Cardiac septum (tissue), 1 donor: ENCODE measurements at regions of chr9 and their contacts with region 1.

Region 1: GRCh38 chr9:2727966-2728613 is 10.8 kb downstream of the KCNV2 start:
- DNase-seq: no peak

Region 2: DNA sequence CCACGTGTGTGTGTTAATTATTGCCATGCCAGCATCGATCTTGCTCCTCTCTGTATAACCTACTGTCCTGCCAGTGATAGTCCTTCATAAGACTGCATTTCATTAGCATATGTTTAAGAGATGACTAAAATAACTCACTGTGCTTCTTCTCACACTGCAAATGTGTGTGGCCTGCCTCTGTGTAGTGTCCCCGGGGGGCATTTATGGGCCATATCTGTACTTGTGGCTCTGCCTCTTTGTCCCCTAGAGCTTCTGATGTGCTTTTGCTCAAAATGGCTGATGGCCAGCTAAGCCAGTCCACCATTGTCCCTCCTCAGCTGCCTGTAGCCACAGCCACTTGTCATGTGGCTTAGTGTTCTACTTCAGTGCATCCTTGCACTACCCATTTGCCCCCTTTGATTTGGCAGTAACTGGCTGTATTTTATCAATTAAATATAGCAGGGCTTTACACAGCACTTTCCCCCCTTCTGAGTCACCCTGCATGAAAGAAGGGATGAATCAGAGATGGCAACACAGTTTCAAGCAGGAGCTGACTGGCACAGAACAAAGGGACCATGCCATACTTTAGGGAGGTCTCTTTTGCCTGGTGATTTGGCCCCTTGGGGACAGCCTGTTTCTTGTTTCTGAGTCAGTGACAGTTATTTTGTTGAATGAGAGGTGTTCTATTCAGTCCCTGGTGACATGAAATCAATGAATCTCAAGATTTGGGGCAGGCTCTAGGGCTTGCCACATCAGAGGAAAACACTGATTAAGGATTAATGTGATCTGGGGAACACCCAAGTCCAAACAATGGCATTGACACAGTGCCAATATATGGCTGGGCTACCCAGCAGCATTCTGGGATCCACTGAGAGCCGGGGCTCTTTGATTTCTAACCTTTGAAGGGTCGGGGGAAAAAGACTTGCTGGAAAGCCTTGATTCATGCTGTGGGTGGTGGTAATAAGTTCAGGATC is 467.5 kb before region 1 on chr9:
- intact Hi-C with region 1: loop called (anchors 10 kb)
- DNase-seq: no peak

Region 3: DNA sequence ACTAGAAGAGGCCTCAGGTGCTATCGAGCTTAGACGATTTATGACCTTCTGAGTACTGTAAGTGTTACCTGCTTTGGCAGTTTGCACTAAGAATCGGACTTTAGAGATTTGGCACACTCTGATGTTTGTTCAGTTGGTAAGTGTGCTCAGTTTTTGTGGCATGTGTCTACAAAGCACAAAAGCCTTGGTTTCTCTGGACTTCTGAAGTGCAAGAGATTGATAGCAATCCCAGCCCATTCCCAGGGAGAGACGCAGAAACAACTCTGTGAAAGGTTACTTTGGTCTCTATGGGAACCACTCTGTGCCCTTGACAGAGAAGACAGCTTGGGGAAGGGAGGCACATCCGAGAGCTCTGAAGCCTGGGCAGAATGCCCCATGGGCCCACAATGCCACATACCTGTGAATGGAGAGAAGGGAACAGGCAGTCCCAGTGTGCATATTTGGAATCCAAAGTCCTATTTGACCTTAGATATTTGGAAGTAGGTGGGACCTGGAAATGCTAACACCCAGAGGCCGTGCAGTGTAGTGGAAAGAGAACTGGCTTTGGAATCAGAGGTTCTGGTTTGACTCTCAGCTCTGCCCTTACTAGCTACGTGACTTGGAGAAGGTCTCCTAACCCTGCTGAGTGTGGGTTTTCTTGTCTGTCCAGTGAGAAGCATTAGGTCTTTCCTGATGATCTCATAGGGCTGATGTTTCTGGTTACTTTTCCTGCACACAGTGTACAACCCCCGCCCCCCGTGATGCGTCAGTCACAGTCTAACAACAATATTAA is 300.8 kb before region 1 on chr9:
- intact Hi-C with region 1: loop called (anchors 10 kb)
- DNase-seq: no peak

Region 4: DNA sequence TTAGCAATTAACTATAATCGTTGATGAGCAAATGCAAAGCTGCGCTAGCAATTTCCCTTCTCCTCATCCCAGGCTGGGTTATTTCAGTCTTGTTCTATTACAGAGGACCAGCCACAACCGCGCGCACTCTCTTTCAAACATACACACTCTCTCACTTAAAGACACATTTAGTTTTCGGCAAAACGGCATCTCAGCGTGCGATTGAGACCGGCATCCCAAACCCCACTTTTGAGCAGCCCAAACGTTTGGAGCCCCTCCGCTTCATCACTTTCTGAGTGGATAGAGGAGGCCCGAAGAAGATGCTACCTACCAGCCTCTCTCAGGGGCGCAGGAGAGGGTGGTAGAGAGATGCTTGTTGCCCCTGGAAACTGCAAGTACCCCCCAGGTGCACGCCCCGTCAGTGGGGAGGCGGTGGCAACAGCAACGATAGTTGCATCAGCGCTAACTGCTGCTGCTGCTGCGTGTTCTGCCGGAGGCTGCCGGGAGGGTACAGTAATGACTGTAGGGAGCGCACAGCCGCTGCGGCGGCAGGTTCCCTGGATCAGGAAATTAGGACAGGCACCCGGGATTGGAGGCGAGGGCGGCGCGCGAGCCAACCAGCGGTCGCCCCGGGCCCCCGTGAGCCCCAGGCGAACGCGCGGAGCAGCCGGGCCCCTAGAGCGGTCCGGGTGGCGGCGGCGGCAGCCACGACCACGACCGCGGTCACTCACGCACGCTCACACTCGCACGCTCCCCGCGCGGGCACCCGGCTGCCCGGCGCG is 107.0 kb before region 1 on chr9:
- intact Hi-C with region 1: loop called (anchors 5 kb)
- DNase-seq: peak; percentile 85

Region 5: GRCh38 chr9:2631263-2631662 is 96.8 kb before region 1 on chr9:
- intact Hi-C with region 1: no loop called
- DNase-seq: no peak

Region 6: GRCh38 chr9:2809691-2810433 is 81.8 kb after region 1 on chr9:
- intact Hi-C with region 1: loop called (anchors 10 kb)
- DNase-seq: no peak